Activated CD4-positive, alpha-beta T cell treated with anti-CD3 and anti-CD28 coated beads for 36 hours (primary cell): ENCODE measurements at regions of chr17 and their contacts with region 1.

Region 1: GRCh38 chr17:66255112-66255511 is 25.9 kb upstream of the APOH start:
- DNase-seq: peak; percentile 35
- ATAC-seq: peak; percentile 93
- H3K4me3 Mint-ChIP-seq: peak overlapping the region; percentile 51
- H3K27ac Mint-ChIP-seq: peak overlapping the region; percentile 86
- H3K4me1 Mint-ChIP-seq: peaks cover 19% of the 10 kb centered on the region
- H3K27me3 Mint-ChIP-seq: no peaks in the 10 kb centered on the region

Region 2: GRCh38 chr17:66426397-66427033 is 171.4 kb after region 1 on chr17:
- CTCF ChIA-PET with region 1: interaction called, 4 read pairs
- POLR2A ChIA-PET with region 1: no interaction called
- intact Hi-C with region 1: loop called (anchors 1 kb)
- DNase-seq: peak; percentile 60
- ATAC-seq: peak; percentile 94
- H3K4me3 Mint-ChIP-seq: peak overlapping the region; percentile 4
- H3K27ac Mint-ChIP-seq: peak overlapping the region; percentile 88
- H3K4me1 Mint-ChIP-seq: peaks cover 77% of the 10 kb centered on the region
- H3K27me3 Mint-ChIP-seq: no peaks in the 10 kb centered on the region

Region 3: DNA sequence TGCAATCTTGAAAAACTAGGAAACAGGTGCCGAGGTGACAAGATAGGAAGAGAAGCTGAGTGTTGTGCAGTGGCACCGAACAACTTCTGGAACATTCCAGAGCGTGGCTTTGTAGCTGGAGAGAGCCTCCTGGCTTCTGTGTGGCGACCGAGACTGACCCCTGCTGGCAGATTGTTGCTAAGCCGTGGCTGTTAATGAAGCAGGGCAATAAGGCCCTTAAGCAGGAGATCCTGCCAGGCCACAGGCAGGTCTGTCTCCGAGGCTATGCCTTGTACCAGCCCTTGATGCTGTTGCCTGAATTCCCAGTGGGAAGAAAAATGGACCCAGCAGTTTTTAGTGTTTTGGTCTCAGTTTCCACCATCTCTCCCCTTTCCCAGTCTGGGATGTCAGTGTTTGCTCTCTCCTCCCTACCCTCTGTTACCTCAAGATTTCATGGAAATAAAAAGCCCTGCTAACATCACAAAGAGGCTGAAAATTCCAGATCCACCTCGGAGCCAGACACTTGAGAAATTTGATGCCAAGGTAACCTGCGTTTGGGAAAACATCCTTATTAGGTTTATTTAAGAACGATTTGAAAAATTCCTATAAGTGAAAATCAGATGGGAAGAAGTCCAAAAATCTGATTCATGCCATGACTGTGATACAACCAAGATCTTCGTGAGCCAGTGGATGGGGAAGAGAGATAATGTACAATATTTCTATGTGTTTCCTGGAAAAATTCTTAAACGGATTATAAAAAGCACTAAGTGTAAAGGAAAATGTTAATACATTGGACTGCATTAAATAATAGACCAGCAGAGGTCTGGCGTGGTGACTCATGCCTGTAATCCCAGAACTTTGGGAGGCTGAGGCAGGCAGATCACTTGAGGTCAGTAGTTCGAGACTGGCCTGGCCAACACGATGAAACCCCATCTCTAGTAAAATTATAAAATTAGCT is 312.4 kb after region 1 on chr17:
- CTCF ChIA-PET with region 1: interaction called, 11 read pairs
- POLR2A ChIA-PET with region 1: no interaction called
- intact Hi-C with region 1: loop called (anchors 1 kb)
- DNase-seq: peak; percentile 90
- ATAC-seq: peak; percentile 88
- H3K4me3 Mint-ChIP-seq: no peak overlapping the region
- H3K27ac Mint-ChIP-seq: peak overlapping the region; percentile 31
- H3K4me1 Mint-ChIP-seq: peaks cover 40% of the 10 kb centered on the region
- H3K27me3 Mint-ChIP-seq: no peaks in the 10 kb centered on the region

Region 4: GRCh38 chr17:66673668-66674315 is 418.7 kb after region 1 on chr17:
- CTCF ChIA-PET with region 1: no interaction called
- POLR2A ChIA-PET with region 1: no interaction called
- intact Hi-C with region 1: loop called (anchors 1 kb)
- DNase-seq: peak; percentile 63
- ATAC-seq: peak; percentile 80
- H3K4me3 Mint-ChIP-seq: peak overlapping the region; percentile 6
- H3K27ac Mint-ChIP-seq: peak overlapping the region; percentile 84
- H3K4me1 Mint-ChIP-seq: peaks cover 61% of the 10 kb centered on the region
- H3K27me3 Mint-ChIP-seq: no peaks in the 10 kb centered on the region

Region 5: DNA sequence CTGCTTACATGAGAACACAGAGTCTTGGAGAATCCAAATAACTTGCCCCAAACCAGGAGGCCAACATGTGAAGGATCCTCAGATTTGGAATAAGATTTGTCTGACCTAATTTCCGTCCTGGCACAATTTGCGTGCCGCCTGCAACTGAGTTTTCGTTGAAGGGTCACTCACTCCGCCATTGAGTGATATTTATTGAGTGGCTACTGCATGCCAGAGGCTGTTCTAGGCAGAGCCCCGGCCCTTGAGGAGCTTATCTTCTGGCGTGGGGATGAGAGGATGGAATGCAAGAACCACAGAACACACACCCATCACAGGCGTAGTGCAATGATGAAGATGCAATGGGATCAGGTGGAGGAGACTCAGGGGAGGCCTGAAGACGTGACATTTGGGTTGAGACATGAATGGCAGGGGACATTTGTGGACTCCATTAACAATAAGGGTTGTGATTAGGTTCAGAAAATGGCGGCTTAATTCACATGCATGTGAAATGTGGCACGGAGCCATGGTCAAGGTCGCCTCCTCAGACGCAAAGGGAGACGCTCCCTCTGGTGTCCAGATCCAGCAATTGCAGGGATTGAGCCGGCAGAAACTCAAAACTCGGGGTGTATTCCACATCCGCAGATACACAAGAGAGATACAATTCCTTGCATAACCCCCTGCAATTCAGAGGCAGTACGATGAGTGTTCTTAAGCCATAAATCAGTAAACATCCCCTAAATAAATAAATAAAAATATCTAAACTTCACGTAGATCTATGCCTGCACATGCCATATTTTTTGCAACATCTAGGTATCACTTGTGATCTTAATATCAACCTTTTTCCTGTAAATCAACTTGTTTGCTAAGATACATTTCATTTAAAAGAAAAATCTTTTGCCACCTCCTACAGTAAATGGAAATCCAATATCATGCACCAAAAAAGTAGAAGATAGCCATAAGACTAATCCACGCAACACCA is 651.5 kb after region 1 on chr17:
- CTCF ChIA-PET with region 1: no interaction called
- POLR2A ChIA-PET with region 1: no interaction called
- intact Hi-C with region 1: loop called in 1 of 2 experiments (anchors 1 kb)
- DNase-seq: peak; percentile 86
- ATAC-seq: peak; percentile 64
- H3K4me3 Mint-ChIP-seq: no peak overlapping the region
- H3K27ac Mint-ChIP-seq: no peak overlapping the region
- H3K4me1 Mint-ChIP-seq: peaks cover 5% of the 10 kb centered on the region
- H3K27me3 Mint-ChIP-seq: peaks cover 4% of the 10 kb centered on the region